Adrenal gland (tissue), 19 donors: ENCODE measurements at regions of chr2 and their contacts with region 1.

Region 1: DNA sequence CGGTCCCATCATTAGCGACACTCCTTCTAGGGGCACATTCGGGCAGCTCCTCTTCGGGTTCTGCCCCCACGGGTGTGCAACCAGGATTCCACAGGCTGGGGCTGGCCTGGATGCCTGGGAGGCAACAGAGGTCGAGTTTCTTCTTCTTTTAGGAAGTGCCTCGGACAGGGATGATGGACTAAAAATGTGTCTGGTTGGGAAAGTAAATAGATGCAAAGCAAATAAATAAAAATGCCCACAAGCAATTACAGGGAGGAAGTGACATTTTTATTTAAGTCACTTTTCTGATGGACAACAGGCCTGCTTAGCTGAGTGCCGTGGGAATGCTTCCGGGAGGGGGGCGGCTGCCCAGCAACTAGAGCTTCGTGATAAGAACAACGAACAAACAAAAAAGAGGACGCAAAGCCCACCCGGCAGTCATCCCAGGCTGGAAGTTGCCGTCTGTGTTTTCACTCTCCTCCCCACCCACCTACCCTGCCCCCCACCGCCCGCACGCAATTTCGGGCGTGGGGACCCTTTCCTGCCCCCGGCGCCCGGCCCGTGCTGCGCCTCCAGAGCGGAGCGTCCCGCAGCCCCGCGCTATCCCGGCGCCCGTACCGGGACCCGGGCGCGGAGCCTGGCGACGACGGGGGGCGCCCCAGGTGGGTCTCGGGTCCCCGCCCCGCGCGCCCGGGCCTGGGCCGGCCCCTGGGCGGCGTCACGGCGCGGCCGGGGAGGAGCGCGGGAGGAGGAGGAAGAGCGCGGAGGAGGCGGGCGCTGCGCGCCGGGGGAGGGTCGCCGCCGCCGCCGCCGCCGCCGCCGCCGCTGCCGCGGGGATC is 412 bp upstream of the NCK2 start:
- DNase-seq: peak; percentile 40 to 71 (median 50)
- H3K4me3 ChIP-seq: peak overlapping the region in 2 of 4 donors; percentile 47 to 93
- H3K27ac ChIP-seq: peak overlapping the region in 4 of 5 donors; percentile 53 to 95 (median 74)
- H3K4me1 ChIP-seq: peaks cover 27 to 43% of the 10 kb centered on the region in 2 donors
- H3K27me3 ChIP-seq: no peaks in the 10 kb centered on the region
- CTCF ChIP-seq: peak in 1 of 6 experiments; percentile 2
- POLR2A ChIP-seq: peak in 1 of 2 donors; percentile 16

Region 2: GRCh38 chr2:105888625-105889400 is 144.5 kb after region 1 on chr2:
- intact Hi-C with region 1: loop called in 1 of 2 experiments (anchors 10 kb)
- DNase-seq: no peak
- H3K4me3 ChIP-seq: no peak overlapping the region
- H3K27ac ChIP-seq: no peak overlapping the region
- H3K4me1 ChIP-seq: peaks cover 11 to 37% of the 10 kb centered on the region in 2 donors
- H3K27me3 ChIP-seq: no peaks in the 10 kb centered on the region
- CTCF ChIP-seq: no peak
- POLR2A ChIP-seq: no peak

Region 3: DNA sequence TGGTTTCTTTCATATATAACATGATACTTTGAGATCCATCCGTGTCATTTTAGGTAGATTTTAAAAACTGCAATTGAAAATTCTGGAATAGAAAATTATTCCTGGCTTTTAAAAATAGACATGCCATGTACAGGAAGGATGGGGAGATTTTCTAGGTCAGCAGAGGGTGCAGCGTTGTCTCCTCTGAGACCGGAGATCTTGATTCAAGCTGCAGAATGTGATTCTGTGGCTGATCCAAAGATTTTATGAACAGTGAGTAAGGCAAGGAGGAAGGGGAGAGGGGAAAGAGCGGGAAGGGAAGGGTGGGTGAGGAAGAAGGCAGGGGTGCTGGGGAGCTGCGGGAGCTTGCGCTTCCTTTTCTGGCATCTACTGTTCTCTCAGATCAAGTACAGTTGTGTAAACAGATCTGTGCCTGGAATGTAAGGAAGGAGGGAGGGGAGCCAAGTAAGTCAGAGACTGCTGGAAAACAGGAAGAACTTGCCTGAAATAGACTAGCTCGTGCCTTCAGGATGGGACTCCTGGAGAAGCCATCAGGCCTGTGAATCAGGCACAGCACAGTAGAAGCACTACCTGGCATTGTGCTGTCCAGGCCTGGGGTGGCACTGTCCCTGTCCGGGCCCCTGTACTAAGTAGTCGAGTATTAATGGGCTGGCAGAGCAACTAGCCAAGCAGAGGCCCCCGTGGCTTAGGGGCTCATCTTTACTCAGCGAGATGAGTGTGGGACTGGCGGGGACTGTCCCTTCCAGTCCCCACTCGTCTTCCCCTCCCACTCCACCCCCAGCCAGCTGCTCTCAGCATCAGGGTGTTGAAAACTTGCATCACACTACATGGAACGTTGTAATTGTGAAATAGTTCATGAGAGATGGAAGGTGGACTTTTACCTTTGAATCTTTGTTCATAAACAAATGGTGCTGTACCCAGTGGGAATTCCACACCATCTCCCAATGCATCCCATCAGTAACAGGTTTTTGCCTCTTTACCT is 286.3 kb after region 1 on chr2:
- intact Hi-C with region 1: no loop called
- DNase-seq: peak in 6 of 7 donors; percentile 11 to 59 (median 23)
- H3K4me3 ChIP-seq: no peak overlapping the region
- H3K27ac ChIP-seq: peak overlapping the region in 3 of 5 donors; percentile 53 to 85 (median 73)
- H3K4me1 ChIP-seq: no peaks in the 10 kb centered on the region
- H3K27me3 ChIP-seq: no peaks in the 10 kb centered on the region
- CTCF ChIP-seq: no peak
- POLR2A ChIP-seq: no peak

Region 4: GRCh38 chr2:106629981-106630380 is 885.7 kb after region 1 on chr2:
- intact Hi-C with region 1: no loop called
- DNase-seq: no peak
- H3K4me3 ChIP-seq: no peak overlapping the region
- H3K27ac ChIP-seq: no peak overlapping the region
- H3K4me1 ChIP-seq: no peaks in the 10 kb centered on the region
- H3K27me3 ChIP-seq: no peaks in the 10 kb centered on the region
- CTCF ChIP-seq: no peak
- POLR2A ChIP-seq: no peak